ENCODE measurements at regions of chr16 and their contacts with region 1.

Region 1: DNA sequence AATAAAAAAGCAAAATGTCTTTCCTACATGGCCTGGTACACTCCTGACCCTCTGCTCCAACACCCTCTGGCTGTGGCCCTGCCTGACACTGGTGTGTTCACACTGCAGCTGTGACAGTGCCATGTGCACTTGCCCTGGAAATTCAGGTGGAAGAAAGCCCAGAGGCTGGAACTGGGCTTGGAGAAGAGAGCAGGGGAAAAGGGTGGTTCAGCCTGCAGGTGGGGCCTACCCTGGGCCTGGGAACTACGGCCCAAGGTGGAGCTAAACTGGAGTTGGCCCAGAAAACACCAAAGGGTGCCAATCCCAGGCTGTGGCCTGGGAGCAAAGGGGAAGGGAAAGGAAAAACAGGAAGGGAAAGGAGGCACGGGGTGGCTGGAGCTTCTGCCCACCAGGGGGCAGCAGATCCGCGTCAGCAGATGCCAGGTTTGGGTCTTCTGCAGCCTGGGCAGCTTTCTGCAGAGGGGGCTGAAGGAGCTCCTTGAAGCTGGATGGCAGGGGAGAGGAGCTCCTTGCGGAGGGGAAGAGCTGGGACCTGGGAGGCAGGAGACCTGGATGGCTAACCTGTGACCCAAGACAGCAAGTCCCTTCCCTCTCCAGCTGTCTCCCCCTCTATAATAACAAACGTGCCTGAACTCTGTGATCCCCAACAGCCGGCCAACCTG is 15.4 kb upstream of the CTCF start:
- DNase-seq: peak; percentile 34
- ATAC-seq: peak; percentile 74
- H3K4me3 ChIP-seq: no peak overlapping the region
- H3K27ac ChIP-seq: peak overlapping the region; percentile 25; the same call in 1 of the 2 replicates
- H3K4me1 ChIP-seq: peaks cover 0 to 13% of the 10 kb centered on the region in 2 experiments; a peak in 2 of 4 replicates
- H3K27me3 ChIP-seq: no peaks in the 10 kb centered on the region
- CTCF ChIP-seq: peak; percentile 89 to 95 (median 90)
- POLR2A ChIP-seq: no peak
- RAD21 ChIP-seq: peak; percentile 92

Region 2: GRCh38 chr16:67499106-67499505 is 47.8 kb before region 1 on chr16:
- CTCF ChIA-PET with region 1: no interaction called
- POLR2A ChIA-PET with region 1: no interaction called
- RAD21 ChIA-PET with region 1: no interaction called
- intact Hi-C with region 1: loop called (anchors 1 kb)
- DNase-seq: no peak
- ATAC-seq: no peak
- H3K4me3 ChIP-seq: no peak overlapping the region
- H3K27ac ChIP-seq: no peak overlapping the region
- H3K4me1 ChIP-seq: peaks cover 0 to 2% of the 10 kb centered on the region in 2 experiments; a peak in 1 of 4 replicates
- H3K27me3 ChIP-seq: no peaks in the 10 kb centered on the region
- CTCF ChIP-seq: no peak
- POLR2A ChIP-seq: no peak
- RAD21 ChIP-seq: no peak

Region 3: DNA sequence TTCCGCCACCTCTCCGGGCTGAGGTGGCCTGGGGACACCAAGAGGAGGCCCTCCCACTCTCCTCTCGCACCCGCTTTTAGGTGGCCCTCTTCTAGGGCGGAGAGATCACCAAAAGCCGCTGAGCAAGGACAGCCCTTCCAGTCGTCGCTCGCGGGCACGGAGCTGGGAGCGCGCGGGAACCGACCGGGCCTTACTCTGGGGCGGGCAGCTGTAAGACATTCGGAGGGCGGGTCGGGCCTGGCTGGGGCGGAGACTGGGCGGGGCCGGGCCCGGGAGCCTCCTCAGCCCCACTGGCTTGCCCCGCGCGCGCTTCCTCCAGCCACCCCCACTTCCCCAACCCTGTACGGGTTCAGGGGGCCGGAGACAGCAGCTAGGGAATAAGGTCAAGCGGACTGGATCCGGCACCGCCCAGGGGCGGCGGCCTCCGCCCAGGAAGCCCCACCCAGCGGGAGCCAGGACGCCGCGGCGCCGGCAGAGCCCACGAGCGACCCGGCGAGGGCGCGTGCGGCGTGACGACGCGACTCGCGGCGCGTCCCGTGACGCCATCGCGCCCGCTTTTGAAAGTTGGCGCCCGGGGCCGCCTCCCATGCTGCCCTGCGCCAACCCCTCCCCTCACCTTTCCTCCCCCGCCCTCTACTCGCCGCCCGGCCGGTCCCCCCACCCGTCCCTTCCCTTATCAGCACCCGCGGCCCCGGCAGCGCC is 15.1 kb after region 1 on chr16:
- CTCF ChIA-PET with region 1: interaction called, 21 read pairs
- POLR2A ChIA-PET with region 1: interaction called, 4 read pairs
- RAD21 ChIA-PET with region 1: interaction called in 1 of 2 experiments, 4 read pairs
- intact Hi-C with region 1: no loop called
- DNase-seq: peak; percentile 92
- ATAC-seq: peak; percentile 86
- H3K4me3 ChIP-seq: peak overlapping the region; percentile 88 to 99
- H3K27ac ChIP-seq: peak overlapping the region; percentile 100
- H3K4me1 ChIP-seq: peaks cover 18 to 26% of the 10 kb centered on the region in 2 experiments
- H3K27me3 ChIP-seq: no peaks in the 10 kb centered on the region
- CTCF ChIP-seq: no peak
- POLR2A ChIP-seq: peak; percentile 22
- RAD21 ChIP-seq: no peak

Region 4: DNA sequence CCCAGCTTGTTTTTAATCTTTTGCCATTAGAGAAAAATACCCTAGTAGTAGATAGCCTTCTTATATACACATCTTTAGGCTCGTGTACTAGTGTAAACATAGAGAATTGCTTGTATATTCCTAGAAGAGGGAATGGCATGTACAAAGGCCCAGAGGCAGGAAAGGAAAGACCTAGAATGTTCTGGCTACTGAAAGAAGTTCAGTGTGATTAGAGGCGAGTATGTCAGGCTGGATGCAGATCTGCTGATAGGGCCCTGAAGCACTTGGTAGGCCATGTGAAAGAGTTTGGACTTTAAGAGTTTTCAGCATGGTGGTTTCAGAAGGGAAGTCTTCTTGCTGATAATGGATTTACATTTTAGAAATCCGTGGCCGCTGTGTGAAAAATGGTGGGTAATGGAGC is 32.8 kb after region 1 on chr16:
- CTCF ChIA-PET with region 1: no interaction called
- POLR2A ChIA-PET with region 1: no interaction called
- RAD21 ChIA-PET with region 1: no interaction called
- intact Hi-C with region 1: no loop called
- DNase-seq: no peak
- ATAC-seq: no peak
- H3K4me3 ChIP-seq: no peak overlapping the region
- H3K27ac ChIP-seq: no peak overlapping the region
- H3K4me1 ChIP-seq: no peaks in the 10 kb centered on the region
- H3K27me3 ChIP-seq: no peaks in the 10 kb centered on the region
- CTCF ChIP-seq: no peak
- POLR2A ChIP-seq: no peak
- RAD21 ChIP-seq: no peak

Region 5: GRCh38 chr16:67645397-67646121 is 98.7 kb after region 1 on chr16:
- CTCF ChIA-PET with region 1: interaction called, 3 read pairs
- POLR2A ChIA-PET with region 1: no interaction called
- RAD21 ChIA-PET with region 1: no interaction called
- intact Hi-C with region 1: loop called (anchors 1 kb)
- DNase-seq: no peak
- ATAC-seq: no peak
- H3K4me3 ChIP-seq: no peak overlapping the region
- H3K27ac ChIP-seq: no peak overlapping the region
- H3K4me1 ChIP-seq: peaks cover 0 to 8% of the 10 kb centered on the region in 2 experiments; a peak in 1 of 4 replicates
- H3K27me3 ChIP-seq: no peaks in the 10 kb centered on the region
- CTCF ChIP-seq: no peak
- POLR2A ChIP-seq: no peak
- RAD21 ChIP-seq: no peak

Region 6: DNA sequence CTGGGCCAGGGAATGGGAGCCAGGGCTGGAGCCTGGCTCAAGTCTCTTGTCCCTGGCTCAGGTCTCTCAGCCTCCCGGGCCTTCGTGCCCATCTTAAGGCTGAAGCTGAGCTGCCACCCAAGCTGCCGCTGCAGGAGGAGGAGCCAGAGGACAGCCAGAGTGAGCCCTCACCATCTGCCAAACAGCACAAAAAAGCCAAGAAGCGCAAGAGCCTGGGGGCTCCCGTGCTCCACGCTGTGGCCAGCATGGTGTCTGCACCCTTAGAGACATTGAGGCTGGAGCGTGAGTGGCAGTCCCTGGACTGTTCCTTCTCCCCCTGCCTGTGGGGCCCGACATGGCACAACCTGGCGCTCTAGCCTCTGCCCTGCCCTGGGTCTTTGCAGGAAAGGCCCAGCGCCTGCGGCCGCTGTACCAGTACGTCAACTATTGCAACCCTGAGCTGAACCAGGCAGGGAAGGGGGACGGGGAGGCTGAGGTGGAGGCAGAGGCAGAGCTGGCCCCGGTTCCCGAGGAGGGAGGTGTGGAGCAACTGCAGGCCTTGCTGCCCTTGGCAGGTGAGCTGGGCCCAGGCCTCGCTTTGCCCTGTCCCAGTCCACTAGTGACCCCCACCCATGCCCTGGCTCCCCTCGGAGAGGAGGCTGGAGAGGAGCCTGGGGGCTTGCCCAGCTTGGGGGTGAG is 121.1 kb after region 1 on chr16:
- CTCF ChIA-PET with region 1: interaction called, 9 read pairs
- POLR2A ChIA-PET with region 1: no interaction called
- RAD21 ChIA-PET with region 1: no interaction called
- intact Hi-C with region 1: loop called (anchors 1 kb)
- DNase-seq: peak; percentile 77
- ATAC-seq: peak; percentile 83
- H3K4me3 ChIP-seq: no peak overlapping the region
- H3K27ac ChIP-seq: peak overlapping the region; percentile 50; the same call in 1 of the 2 replicates
- H3K4me1 ChIP-seq: peaks cover 6 to 41% of the 10 kb centered on the region in 2 experiments; a peak in 3 of 4 replicates
- H3K27me3 ChIP-seq: no peaks in the 10 kb centered on the region
- CTCF ChIP-seq: peak in 2 of 3 experiments; percentile 75 to 88; a peak in 4 of 6 replicates
- POLR2A ChIP-seq: no peak
- RAD21 ChIP-seq: no peak